ENCODE measurements at regions of chr2 and their contacts with region 1.

Region 1: GRCh38 chr2:6909431-6910385 is 7.5 kb upstream of the RNF144A start:
- DNase-seq: peak; percentile 91
- H3K4me3 Mint-ChIP-seq: peak overlapping the region; percentile 81
- H3K27ac Mint-ChIP-seq: peak overlapping the region; percentile 91
- H3K4me1 Mint-ChIP-seq: peaks cover 78% of the 10 kb centered on the region
- H3K27me3 Mint-ChIP-seq: peaks cover under 1% of the 10 kb centered on the region

Region 2: DNA sequence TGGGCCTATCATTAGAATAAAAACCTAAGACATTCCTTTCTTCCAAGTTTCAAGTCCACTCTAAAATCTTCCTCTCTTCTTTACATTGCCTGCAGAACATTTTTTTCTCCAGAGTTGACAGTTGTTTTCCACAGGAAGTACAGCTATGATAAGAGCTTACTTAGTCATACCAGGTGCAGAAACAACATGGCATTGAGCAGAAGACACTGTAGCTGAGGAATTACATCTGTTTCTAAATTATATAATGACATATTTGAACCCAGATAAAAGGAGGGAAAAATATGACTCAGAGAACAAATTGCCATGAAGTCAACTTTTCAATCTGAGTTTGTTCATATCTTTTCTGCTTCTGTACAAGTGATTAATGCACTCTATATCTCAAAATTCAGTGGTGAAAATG is 74.2 kb before region 1 on chr2:
- intact Hi-C with region 1: loop called (anchors 2 kb)
- DNase-seq: no peak
- H3K4me3 Mint-ChIP-seq: no peak overlapping the region
- H3K27ac Mint-ChIP-seq: peak overlapping the region; percentile 30
- H3K4me1 Mint-ChIP-seq: peaks cover 21% of the 10 kb centered on the region
- H3K27me3 Mint-ChIP-seq: no peaks in the 10 kb centered on the region

Region 3: DNA sequence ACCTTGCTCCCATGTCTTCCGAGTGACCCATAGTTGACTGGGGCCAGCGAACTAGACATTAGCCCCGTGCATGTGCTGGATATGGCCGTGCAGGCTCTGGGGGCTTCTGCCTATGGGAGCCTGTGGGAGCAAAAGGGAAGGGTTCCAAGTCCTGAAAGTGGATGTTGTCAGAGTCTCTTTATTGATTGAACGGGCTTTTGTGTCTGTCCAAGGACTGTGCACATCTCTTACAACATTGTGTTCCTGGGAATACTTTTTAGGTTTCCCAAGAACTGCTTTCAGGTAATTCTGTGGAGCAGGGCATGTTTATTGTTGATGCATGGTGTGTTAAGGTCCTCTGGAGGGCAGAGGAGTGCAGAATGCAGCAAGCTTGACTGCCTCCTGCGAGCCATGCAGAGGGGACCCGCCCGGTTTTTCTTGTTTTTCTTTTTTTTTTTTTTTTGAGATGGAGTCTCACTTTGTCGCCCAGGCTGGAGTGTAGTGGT is 12.5 kb after region 1 on chr2:
- intact Hi-C with region 1: no loop called
- DNase-seq: peak; percentile 61
- H3K4me3 Mint-ChIP-seq: no peak overlapping the region
- H3K27ac Mint-ChIP-seq: no peak overlapping the region
- H3K4me1 Mint-ChIP-seq: peaks cover 44% of the 10 kb centered on the region
- H3K27me3 Mint-ChIP-seq: no peaks in the 10 kb centered on the region

Region 4: GRCh38 chr2:6945087-6945813 is 35.5 kb after region 1 on chr2:
- intact Hi-C with region 1: loop called (anchors 5 kb)
- DNase-seq: peak; percentile 53
- H3K4me3 Mint-ChIP-seq: peak overlapping the region; percentile 12
- H3K27ac Mint-ChIP-seq: peak overlapping the region; percentile 83
- H3K4me1 Mint-ChIP-seq: peaks cover 44% of the 10 kb centered on the region
- H3K27me3 Mint-ChIP-seq: no peaks in the 10 kb centered on the region